ENCODE measurements at regions of chr12 and their contacts with region 1.

Region 1: DNA sequence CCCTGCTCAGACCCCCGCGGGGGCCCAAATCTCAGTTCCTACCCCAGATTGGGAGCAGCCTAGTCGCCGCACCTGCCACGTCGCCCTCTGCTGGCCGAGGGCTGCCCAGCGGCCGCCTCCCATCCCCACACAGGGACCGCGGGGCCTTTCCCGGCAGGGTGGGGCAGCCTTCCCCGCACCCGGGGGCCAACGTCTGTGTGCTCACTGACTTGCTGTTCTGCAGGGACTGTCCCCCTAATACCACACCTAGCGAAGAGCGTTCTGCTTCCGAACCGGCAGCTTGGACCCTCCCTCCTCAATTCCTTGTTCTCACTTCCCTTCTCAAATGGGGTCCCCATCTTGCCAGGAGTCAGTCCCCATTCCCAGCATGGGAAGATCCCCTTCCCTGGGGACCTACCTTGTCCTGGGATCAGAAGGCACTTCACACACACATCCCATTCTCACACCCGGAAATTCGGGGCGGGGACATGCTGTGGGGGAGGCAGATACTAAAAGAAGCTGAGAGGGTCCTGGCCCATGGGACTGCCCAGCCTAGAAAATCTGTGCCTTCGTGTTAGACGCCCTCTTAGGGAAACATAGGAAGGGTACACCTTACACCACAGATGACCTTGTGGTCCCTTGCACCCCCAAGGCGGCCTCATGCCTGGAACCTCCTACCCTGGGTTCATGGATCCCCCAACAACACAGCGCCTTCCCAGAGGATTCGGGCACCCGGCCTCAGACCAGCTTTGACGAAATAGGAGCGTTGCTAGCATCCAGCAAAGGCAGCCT is 16.4 kb downstream of the ACVRL1 start:
- DNase-seq: peak; percentile 58
- H3K4me3 ChIP-seq: no peak overlapping the region; a peak in 1 of 4 replicates
- H3K27ac ChIP-seq: no peak overlapping the region
- H3K4me1 ChIP-seq: peaks cover 0 to 39% of the 10 kb centered on the region in 2 experiments; a peak in 1 of 4 replicates
- H3K27me3 ChIP-seq: no peaks in the 10 kb centered on the region
- CTCF ChIP-seq: peak; percentile 52
- EP300 ChIP-seq: no peak
- RAD21 ChIP-seq: no peak

Region 2: GRCh38 chr12:51721282-51721940 is 202.3 kb before region 1 on chr12:
- CTCF ChIA-PET with region 1: no interaction called
- POLR2A ChIA-PET with region 1: no interaction called
- DNase-seq: peak; percentile 87
- H3K4me3 ChIP-seq: peak overlapping the region in 1 of 2 experiments; percentile 17; a peak in 1 of 4 replicates
- H3K27ac ChIP-seq: no peak overlapping the region
- H3K4me1 ChIP-seq: no peaks in the 10 kb centered on the region; a peak in 1 of 4 replicates
- H3K27me3 ChIP-seq: no peaks in the 10 kb centered on the region
- CTCF ChIP-seq: no peak
- EP300 ChIP-seq: no peak
- RAD21 ChIP-seq: no peak

Region 3: DNA sequence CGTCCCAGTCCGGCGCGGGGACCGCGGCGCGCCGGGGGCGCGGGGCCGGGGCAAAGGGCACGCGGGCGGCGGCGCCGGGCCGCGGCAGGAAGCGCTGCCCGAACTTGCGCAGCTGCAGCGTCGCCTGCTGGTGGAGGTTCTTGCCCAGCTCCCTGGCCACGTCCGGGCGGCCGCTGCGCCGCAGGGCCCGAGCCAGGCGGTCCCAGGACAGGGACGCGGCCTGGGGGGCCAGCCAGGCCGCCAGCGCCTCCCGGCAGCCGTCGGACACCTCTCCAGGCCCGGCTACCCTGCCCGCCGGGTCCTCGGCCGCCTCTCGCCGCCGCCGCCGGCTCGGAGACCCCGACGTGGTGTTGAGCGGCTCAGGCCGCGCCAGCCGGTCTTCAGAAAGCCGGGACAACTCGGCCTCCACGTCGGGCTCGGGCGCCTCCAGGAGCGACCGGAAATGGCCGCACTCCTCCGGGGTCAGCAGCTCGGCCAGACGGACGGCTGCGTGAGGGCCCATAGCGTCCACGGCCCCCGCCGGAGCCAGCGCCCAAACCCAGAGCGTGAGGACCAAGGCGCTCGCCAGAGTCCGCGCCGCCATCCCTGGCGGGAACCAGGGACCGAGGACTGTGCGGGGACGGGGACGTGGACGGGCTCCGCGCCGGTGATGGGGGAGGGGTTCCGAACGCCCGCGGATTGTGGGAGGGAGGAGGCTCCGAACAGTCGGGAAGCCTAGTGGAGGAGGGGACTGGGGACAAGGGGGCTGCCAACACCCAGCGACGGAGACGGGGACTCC is 109.2 kb before region 1 on chr12:
- CTCF ChIA-PET with region 1: no interaction called
- POLR2A ChIA-PET with region 1: no interaction called
- DNase-seq: peak; percentile 95
- H3K4me3 ChIP-seq: peak overlapping the region; percentile 26 to 48; a peak in 2 of 4 replicates
- H3K27ac ChIP-seq: no peak overlapping the region; a peak in 1 of 4 replicates
- H3K4me1 ChIP-seq: peaks cover 8 to 14% of the 10 kb centered on the region in 2 experiments; a peak in 3 of 4 replicates
- H3K27me3 ChIP-seq: no peaks in the 10 kb centered on the region
- CTCF ChIP-seq: peak; percentile 49
- EP300 ChIP-seq: no peak
- RAD21 ChIP-seq: peak; percentile 65

Region 4: GRCh38 chr12:51891843-51892242 is 31.8 kb before region 1 on chr12:
- CTCF ChIA-PET with region 1: interaction called, 55 read pairs
- POLR2A ChIA-PET with region 1: no interaction called
- DNase-seq: no peak
- H3K4me3 ChIP-seq: no peak overlapping the region
- H3K27ac ChIP-seq: no peak overlapping the region
- H3K4me1 ChIP-seq: peaks cover 0 to 9% of the 10 kb centered on the region in 2 experiments; a peak in 1 of 4 replicates
- H3K27me3 ChIP-seq: no peaks in the 10 kb centered on the region
- CTCF ChIP-seq: peak; percentile 61
- EP300 ChIP-seq: no peak
- RAD21 ChIP-seq: peak; percentile 68

Region 5: DNA sequence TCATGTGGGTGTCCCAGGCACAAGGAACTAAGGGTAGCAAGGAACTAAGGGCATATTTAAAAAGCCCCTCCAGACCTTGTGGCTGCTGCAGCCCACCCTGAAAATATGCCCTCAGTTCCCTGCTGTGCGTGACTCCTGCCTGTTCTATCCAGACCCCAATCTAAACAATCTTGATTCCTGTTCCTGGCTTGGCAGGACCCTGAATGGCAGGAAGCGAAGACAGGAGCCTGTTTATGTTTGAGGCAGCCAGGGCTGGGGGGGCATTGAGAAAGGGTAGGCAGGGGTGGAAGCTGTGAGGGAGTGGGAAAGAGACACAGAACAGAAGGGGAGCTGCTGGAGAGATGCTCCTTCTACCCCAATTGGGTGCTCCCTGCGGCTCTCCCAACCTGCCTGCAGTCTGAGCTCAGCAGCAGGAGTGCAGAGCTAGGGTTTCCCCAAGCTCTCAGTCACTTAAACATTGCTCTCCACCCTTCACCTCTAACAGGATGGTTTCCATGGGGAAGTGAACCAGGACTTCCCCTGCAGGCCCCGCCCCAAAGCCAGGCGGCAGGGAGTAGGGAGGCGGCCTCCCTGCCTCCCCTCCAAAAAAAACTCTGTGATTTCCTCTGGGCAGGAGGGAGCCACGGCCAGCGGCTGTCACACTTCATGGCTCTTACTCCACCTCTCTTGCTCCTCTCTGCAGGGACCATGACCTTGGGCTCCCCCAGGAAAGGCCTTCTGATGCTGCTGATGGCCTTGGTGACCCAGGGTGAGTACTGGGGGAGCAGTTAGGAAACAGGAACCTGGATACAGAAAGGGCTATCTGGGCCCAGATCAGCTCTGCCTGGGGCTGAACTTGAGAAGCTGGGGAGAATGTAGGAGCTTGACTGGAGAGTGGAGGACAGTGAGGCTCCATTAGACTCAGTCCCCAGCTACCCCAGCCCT is 11.6 kb before region 1 on chr12:
- CTCF ChIA-PET with region 1: interaction called, 28 read pairs
- POLR2A ChIA-PET with region 1: interaction called, 3 read pairs
- DNase-seq: peak; percentile 77
- H3K4me3 ChIP-seq: no peak overlapping the region
- H3K27ac ChIP-seq: peak overlapping the region in 1 of 2 experiments; percentile 84; a peak in 2 of 4 replicates
- H3K4me1 ChIP-seq: peaks cover 0 to 64% of the 10 kb centered on the region in 2 experiments; a peak in 2 of 4 replicates
- H3K27me3 ChIP-seq: no peaks in the 10 kb centered on the region
- CTCF ChIP-seq: no peak
- EP300 ChIP-seq: peak in 1 of 2 experiments; percentile 16; a peak in 1 of 4 replicates
- RAD21 ChIP-seq: no peak

Region 6: GRCh38 chr12:51980051-51980808 is 56.5 kb after region 1 on chr12:
- CTCF ChIA-PET with region 1: interaction called, 29 read pairs
- POLR2A ChIA-PET with region 1: no interaction called
- DNase-seq: peak; percentile 85
- H3K4me3 ChIP-seq: peak overlapping the region in 1 of 2 experiments; percentile 26; a peak in 1 of 4 replicates
- H3K27ac ChIP-seq: peak overlapping the region in 1 of 2 experiments; percentile 8; a peak in 1 of 4 replicates
- H3K4me1 ChIP-seq: peaks cover 0 to under 1% of the 10 kb centered on the region in 2 experiments; a peak in 1 of 4 replicates
- H3K27me3 ChIP-seq: no peaks in the 10 kb centered on the region
- CTCF ChIP-seq: peak; percentile 97
- EP300 ChIP-seq: no peak
- RAD21 ChIP-seq: peak; percentile 97

Region 7: DNA sequence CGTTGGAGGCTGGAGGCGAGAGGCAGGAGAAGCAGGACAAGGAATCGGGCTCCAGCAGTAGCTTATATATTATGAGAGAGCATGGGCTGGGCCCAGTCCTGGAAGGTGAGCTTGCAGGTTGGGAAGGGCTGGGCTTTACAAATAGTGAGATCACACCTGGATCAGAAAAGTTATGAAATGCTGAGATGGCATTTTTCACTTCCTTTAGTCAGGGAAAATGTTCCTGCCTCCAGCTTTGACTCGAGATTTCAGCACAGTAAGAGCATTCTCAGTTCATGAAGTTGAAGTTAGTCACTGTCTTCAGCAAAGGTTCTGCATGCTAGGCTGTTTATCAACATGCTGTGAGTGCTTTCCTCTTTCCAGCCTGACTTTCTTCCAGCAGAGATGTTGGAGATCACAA is 550.1 kb after region 1 on chr12 and contains the start of gene KRT6C:
- CTCF ChIA-PET with region 1: no interaction called
- POLR2A ChIA-PET with region 1: no interaction called
- DNase-seq: no peak
- H3K4me3 ChIP-seq: no peak within 1 kb of the TSS
- H3K27ac ChIP-seq: no peak within 1 kb of the TSS
- H3K4me1 ChIP-seq: no peaks in the 10 kb centered on the region
- H3K27me3 ChIP-seq: peaks cover 12% of the 10 kb centered on the region; the same call in 1 of the 2 replicates
- CTCF ChIP-seq: no peak
- EP300 ChIP-seq: no peak
- RAD21 ChIP-seq: no peak
- polyA plus RNA-seq, gene KRT6C: not detected in 2 replicates